Panc1 (cell line): ENCODE measurements at regions of chr4 and their contacts with region 1.

Region 1: GRCh38 chr4:13793020-13793710 is 165.6 kb upstream of the BOD1L1 start:
- DNase-seq: no peak
- ATAC-seq: no peak
- H3K4me3 ChIP-seq: no peak overlapping the region
- H3K27ac ChIP-seq: no peak overlapping the region
- H3K4me1 ChIP-seq: no peaks in the 10 kb centered on the region
- H3K27me3 ChIP-seq: no peaks in the 10 kb centered on the region
- CTCF ChIP-seq: no peak

Region 2: DNA sequence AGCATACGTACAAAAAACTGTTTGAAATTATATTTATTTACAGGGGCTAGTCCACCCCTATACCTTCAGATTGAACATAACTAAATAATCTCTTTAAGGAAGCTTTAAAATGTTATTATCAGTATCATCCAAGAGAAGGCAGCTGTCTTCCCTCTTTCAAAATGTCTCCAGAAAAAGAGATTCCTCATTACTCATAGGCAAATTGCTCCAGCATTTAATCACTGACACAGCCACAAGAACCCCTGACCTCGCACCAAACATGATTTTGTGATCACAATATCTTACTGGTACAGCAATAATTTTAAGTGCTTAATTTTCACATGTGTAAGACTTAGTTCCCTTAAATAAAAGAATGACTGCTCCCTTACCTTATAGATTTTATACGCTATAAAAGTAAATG is 175.4 kb before region 1 on chr4:
- CTCF ChIA-PET with region 1: no interaction called
- POLR2A ChIA-PET with region 1: no interaction called
- in situ Hi-C with region 1: no loop called
- intact Hi-C with region 1: no loop called
- DNase-seq: no peak
- ATAC-seq: no peak
- H3K4me3 ChIP-seq: no peak overlapping the region
- H3K27ac ChIP-seq: no peak overlapping the region
- H3K4me1 ChIP-seq: no peaks in the 10 kb centered on the region
- H3K27me3 ChIP-seq: no peaks in the 10 kb centered on the region
- CTCF ChIP-seq: no peak

Region 3: DNA sequence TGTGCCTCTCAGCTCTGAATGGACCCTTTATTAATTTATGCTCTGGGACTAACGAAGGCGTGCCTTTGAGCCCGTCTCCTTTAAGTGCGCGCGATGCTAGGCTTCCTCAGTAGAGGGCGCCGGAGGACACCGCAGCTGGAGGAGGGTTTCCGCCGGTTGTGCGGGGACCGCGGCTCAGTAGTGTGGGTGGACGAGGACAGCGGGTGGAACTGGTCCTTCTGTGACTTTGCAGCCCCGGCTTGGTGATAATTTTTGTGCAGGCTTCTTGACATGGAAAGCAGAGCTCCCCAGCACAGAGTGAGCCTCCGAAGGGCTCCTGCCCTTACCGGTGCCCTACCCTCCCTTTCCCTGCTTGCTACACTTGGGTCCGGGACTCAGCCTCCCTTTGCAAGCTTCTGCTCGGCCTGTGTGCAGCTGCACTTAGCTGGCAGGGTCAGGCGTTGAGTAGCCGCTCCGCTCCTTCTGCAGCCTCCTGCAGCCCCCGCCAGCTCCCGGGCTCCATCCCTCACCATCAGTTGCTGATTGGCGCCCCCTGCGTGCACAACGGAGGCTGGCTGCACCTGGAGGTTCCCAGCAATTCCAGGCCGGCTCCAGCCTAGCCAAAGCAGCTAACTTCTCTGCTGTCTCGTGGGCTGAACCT is 138.9 kb before region 1 on chr4:
- CTCF ChIA-PET with region 1: no interaction called
- POLR2A ChIA-PET with region 1: no interaction called
- in situ Hi-C with region 1: no loop called
- intact Hi-C with region 1: loop called (anchors 10 kb)
- DNase-seq: peak; percentile 41
- ATAC-seq: peak; percentile 94
- H3K4me3 ChIP-seq: peak overlapping the region; percentile 36 to 64
- H3K27ac ChIP-seq: no peak overlapping the region
- H3K4me1 ChIP-seq: no peaks in the 10 kb centered on the region
- H3K27me3 ChIP-seq: no peaks in the 10 kb centered on the region; the same call in 1 of the 2 replicates
- CTCF ChIP-seq: peak; percentile 91

Region 4: GRCh38 chr4:13733817-13734216 is 59.3 kb before region 1 on chr4:
- CTCF ChIA-PET with region 1: no interaction called
- POLR2A ChIA-PET with region 1: no interaction called
- in situ Hi-C with region 1: no loop called
- intact Hi-C with region 1: no loop called
- DNase-seq: no peak
- ATAC-seq: no peak
- H3K4me3 ChIP-seq: no peak overlapping the region
- H3K27ac ChIP-seq: no peak overlapping the region
- H3K4me1 ChIP-seq: no peaks in the 10 kb centered on the region
- H3K27me3 ChIP-seq: no peaks in the 10 kb centered on the region
- CTCF ChIP-seq: no peak

Region 5: GRCh38 chr4:13933191-13933590 is 140.0 kb after region 1 on chr4:
- CTCF ChIA-PET with region 1: no interaction called
- POLR2A ChIA-PET with region 1: no interaction called
- in situ Hi-C with region 1: no loop called
- intact Hi-C with region 1: no loop called
- DNase-seq: no peak
- ATAC-seq: no peak
- H3K4me3 ChIP-seq: no peak overlapping the region
- H3K27ac ChIP-seq: no peak overlapping the region
- H3K4me1 ChIP-seq: no peaks in the 10 kb centered on the region
- H3K27me3 ChIP-seq: no peaks in the 10 kb centered on the region
- CTCF ChIP-seq: no peak

Region 6: DNA sequence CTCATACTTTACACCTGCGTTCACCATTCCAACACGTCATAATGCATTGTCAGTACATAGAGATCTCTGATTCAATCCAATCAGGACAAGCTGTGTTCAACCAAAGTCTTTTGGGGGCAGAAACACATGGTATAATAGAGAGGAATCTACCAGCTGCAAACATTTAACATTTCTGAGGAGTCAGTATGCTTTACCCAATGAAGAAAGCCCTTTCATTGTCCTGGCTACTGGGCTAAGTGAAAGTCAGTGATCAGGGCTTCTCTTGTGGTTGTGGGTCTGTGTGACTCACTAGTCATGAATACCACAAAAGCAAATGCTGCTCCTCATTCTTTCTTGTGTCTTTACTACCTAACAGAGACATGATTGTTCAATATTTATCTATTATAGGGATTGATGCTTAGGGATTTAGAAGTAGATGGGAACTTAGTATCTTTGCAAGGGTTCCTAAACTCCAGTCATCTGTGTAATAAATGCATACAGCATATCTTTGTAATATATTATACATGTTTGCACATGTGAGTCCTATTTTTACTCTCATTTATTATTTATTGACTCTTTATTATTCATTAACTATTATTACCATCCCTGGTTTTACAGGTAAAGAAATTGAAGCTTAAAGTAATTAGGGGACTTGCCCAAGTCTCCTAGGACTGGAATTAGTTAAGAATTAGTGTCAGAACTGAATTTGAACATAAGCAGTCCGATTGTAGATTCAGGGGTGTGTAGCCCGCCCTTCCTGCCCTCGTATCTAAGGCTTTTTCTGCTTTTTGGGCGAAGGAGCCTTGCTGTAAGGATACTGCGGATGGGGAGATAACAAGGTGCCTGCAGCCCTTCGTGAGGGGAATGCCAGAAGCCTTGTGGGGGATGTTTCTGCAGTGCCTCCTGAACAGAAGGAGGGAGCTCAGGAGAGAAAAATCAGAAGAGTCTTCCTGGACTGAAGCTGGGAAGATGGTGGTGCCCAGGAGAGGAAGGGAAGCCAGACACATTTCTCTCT is 187.4 kb after region 1 on chr4:
- CTCF ChIA-PET with region 1: no interaction called
- POLR2A ChIA-PET with region 1: no interaction called
- in situ Hi-C with region 1: no loop called
- intact Hi-C with region 1: no loop called
- DNase-seq: no peak
- ATAC-seq: no peak
- H3K4me3 ChIP-seq: no peak overlapping the region
- H3K27ac ChIP-seq: no peak overlapping the region
- H3K4me1 ChIP-seq: no peaks in the 10 kb centered on the region
- H3K27me3 ChIP-seq: no peaks in the 10 kb centered on the region
- CTCF ChIP-seq: no peak